MCF 10A (cell line): ENCODE measurements at regions of chr2 and their contacts with region 1.

Region 1: DNA sequence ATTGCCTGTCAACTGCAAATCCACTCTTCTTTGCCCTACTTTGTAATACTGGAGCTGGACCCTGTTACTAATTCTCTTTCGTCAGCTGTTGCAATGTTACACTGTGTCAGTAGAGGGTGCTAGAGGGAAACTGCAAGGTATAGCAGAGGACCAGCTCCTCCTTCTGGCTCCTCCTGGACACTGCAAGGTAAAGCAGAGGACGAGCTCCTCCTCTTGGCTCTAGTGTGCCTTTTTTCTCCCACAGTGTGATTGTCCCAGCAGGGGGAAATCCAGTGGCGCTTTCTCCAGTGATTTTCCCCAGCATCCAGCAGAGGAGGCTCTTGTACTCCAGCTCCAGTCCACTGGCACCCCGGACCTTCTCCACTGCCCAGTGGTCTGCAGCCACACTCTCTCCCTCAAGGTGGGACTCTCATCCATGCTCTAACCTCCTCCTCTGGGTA is 95.6 kb downstream of the CAPN13 start:
- DNase-seq: peak; percentile 91
- H3K4me3 Mint-ChIP-seq: no peak overlapping the region
- H3K27ac Mint-ChIP-seq: no peak overlapping the region
- H3K4me1 Mint-ChIP-seq: peaks cover 9% of the 10 kb centered on the region
- H3K27me3 Mint-ChIP-seq: no peaks in the 10 kb centered on the region
- CTCF ChIP-seq: peak; percentile 100

Region 2: GRCh38 chr2:30208452-30208851 is 503.2 kb before region 1 on chr2:
- CTCF ChIA-PET with region 1: interaction called, 471 read pairs
- POLR2A ChIA-PET with region 1: interaction called, 8 read pairs
- intact Hi-C with region 1: loop called (anchors 1 kb)
- DNase-seq: peak; percentile 73
- H3K4me3 Mint-ChIP-seq: no peak overlapping the region
- H3K27ac Mint-ChIP-seq: no peak overlapping the region
- H3K4me1 Mint-ChIP-seq: peaks cover 6% of the 10 kb centered on the region
- H3K27me3 Mint-ChIP-seq: no peaks in the 10 kb centered on the region
- CTCF ChIP-seq: peak; percentile 90

Region 3: DNA sequence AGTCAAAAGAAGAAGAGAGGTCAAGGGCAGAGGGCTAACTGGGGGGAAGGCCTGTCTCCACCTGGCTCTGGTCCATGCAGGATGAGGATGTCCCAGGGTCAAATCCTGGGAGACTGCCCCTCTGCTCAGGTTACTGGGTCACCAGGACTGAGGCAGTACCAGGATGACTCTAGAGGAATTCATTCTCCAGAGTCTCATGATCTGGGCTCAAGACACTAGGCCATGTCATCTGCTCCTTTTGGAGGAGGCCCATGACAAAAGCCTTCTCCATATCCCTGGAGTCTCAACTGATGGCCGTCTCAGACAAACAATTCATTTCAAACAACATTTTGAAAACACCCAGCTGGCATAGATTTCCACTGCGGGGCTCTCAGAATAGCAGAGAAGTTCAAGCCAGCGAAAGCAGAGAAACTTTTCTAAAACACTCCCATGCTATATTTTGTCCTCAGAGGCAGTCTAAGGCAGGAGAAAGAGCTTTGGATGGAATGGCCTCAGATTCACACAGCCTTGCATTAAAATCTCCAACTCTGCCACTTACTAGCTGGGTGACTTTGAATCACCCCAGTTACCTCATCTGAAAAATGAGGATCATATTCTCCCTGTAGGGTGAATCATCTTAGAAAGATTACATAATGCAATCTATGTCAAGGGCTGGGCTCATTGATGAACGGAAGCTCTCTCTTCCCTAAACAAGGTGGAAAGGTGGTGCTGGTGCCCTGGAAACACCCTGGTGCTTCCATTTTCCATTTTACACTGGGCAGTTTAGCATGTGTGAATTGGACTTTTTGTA is 313.4 kb before region 1 on chr2:
- CTCF ChIA-PET with region 1: no interaction called
- POLR2A ChIA-PET with region 1: no interaction called
- intact Hi-C with region 1: no loop called
- DNase-seq: peak; percentile 44
- H3K4me3 Mint-ChIP-seq: no peak overlapping the region
- H3K27ac Mint-ChIP-seq: no peak overlapping the region
- H3K4me1 Mint-ChIP-seq: no peaks in the 10 kb centered on the region
- H3K27me3 Mint-ChIP-seq: peaks cover 19% of the 10 kb centered on the region
- CTCF ChIP-seq: no peak

Region 4: GRCh38 chr2:30721668-30722647 is 10.3 kb after region 1 on chr2:
- CTCF ChIA-PET with region 1: interaction called, 16 read pairs
- POLR2A ChIA-PET with region 1: no interaction called
- intact Hi-C with region 1: no loop called
- DNase-seq: no peak
- H3K4me3 Mint-ChIP-seq: no peak overlapping the region
- H3K27ac Mint-ChIP-seq: no peak overlapping the region
- H3K4me1 Mint-ChIP-seq: no peaks in the 10 kb centered on the region
- H3K27me3 Mint-ChIP-seq: peaks cover 52% of the 10 kb centered on the region
- CTCF ChIP-seq: no peak

Region 5: GRCh38 chr2:31075941-31076590 is 364.4 kb after region 1 on chr2:
- CTCF ChIA-PET with region 1: no interaction called
- POLR2A ChIA-PET with region 1: no interaction called
- intact Hi-C with region 1: no loop called
- DNase-seq: peak; percentile 16
- H3K4me3 Mint-ChIP-seq: no peak overlapping the region
- H3K27ac Mint-ChIP-seq: no peak overlapping the region
- H3K4me1 Mint-ChIP-seq: peaks cover 4% of the 10 kb centered on the region
- H3K27me3 Mint-ChIP-seq: no peaks in the 10 kb centered on the region
- CTCF ChIP-seq: no peak

Region 6: GRCh38 chr2:31170071-31170698 is 458.5 kb after region 1 on chr2:
- CTCF ChIA-PET with region 1: interaction called, 140 read pairs
- POLR2A ChIA-PET with region 1: interaction called, 4 read pairs
- intact Hi-C with region 1: loop called (anchors 1 kb)
- DNase-seq: peak; percentile 71
- H3K4me3 Mint-ChIP-seq: no peak overlapping the region
- H3K27ac Mint-ChIP-seq: no peak overlapping the region
- H3K4me1 Mint-ChIP-seq: no peaks in the 10 kb centered on the region
- H3K27me3 Mint-ChIP-seq: peaks cover 18% of the 10 kb centered on the region
- CTCF ChIP-seq: peak; percentile 96

Region 7: GRCh38 chr2:31523871-31524492 is 812.3 kb after region 1 on chr2:
- CTCF ChIA-PET with region 1: interaction called, 26 read pairs
- POLR2A ChIA-PET with region 1: no interaction called
- intact Hi-C with region 1: loop called (anchors 10 kb)
- DNase-seq: peak; percentile 70
- H3K4me3 Mint-ChIP-seq: no peak overlapping the region
- H3K27ac Mint-ChIP-seq: no peak overlapping the region
- H3K4me1 Mint-ChIP-seq: no peaks in the 10 kb centered on the region
- H3K27me3 Mint-ChIP-seq: no peaks in the 10 kb centered on the region
- CTCF ChIP-seq: peak; percentile 71